HepG2 (cell line): ENCODE measurements at regions of chr11 and their contacts with region 1.

Region 1: DNA sequence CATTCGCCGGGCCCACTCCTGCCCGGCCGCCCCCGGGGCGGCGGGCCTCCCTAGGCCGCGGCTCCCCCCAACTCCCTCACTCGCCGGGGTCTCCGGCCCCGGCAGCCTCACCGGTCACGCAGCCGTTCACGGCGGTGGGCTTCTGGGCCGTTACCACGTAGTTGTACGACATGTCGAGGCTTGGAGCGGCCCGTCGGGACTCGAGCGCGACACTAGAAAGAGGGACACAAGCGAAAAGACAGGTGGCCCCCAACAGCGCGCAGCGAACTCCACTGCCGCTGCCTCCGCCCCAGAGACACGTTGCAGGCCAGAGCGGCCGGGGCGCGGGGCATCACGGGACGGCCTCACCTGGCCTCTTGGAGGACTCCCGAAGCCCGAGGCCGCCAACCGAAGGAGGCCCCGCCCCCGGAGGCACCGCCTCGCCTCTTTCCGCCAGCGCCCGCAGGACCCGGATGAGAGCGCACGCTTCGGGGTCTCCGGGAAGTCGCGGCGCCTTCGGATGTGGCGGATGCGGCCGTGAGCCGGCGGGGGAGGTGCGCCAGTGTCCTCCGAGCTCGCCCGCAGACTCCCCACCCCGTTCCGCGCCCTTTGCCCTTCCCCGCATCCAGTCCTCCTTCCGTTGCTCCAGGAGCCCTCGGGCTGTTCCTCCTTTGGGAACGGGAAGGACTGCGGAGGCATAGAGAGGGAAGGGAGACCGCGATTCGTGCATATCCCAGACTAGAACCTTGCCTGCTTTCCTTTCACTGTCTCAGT is at the starts of genes DDB1 and TKFC:
- DNase-seq: peak; percentile 89
- ATAC-seq: peak; percentile 84
- H3K4me3 ChIP-seq: peak within 1 kb of the TSS; percentile 95 to 98 (median 96)
- H3K27ac ChIP-seq: peak within 1 kb of the TSS; percentile 91
- H3K4me1 ChIP-seq: peaks cover 70% of the 10 kb centered on the region
- H3K27me3 ChIP-seq: no peaks in the 10 kb centered on the region; a peak in 1 of 5 replicates
- CTCF ChIP-seq: peak; percentile 4; the same call in 1 of the 2 replicates
- EP300 ChIP-seq: no peak; a peak in 1 of 4 replicates
- POLR2A ChIP-seq: peak; percentile 94 to 97
- RAD21 ChIP-seq: no peak; the same call in 1 of the 2 replicates
- total RNA-seq, gene DDB1: 266 and 292 TPM in 2 replicates
- total RNA-seq, gene TKFC: 173 and 197 TPM in 2 replicates

Region 2: DNA sequence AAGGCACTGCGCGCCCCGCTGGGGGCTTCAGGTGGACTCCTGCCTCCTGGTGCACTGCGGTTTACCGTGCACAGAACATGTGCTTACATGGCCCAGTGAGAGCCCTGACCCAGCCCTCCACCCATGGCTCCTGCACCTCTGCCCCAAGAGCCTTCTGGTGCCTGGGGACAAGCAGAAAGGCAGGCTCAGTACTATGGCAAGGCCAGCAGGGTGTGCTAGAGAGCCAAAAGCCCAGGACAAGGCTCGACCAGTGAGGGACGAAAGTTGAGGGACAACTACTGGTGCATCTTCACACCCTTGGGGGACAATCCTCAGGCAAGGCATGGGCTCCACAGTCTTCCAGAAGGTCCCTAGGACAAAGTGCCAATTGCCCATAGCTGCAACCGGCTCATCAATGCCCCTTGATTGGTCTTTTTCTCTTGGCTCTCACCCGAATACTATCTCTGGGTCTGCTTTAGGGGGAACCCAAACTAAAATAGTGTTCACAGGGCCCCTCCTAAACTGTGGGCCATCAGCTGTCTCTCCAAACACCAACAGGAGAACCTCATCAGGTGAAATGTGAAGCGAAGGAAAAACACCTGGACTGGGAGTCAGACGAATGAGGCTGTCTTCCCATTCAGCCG is 78.5 kb before region 1 on chr11:
- CTCF ChIA-PET with region 1: no interaction called
- POLR2A ChIA-PET with region 1: no interaction called
- in situ Hi-C with region 1: no loop called
- intact Hi-C with region 1: loop called (anchors 10 kb)
- DNase-seq: peak; percentile 57
- ATAC-seq: peak; percentile 86
- H3K4me3 ChIP-seq: no peak overlapping the region
- H3K27ac ChIP-seq: no peak overlapping the region
- H3K4me1 ChIP-seq: no peaks in the 10 kb centered on the region
- H3K27me3 ChIP-seq: no peaks in the 10 kb centered on the region
- CTCF ChIP-seq: peak; percentile 96
- EP300 ChIP-seq: no peak
- POLR2A ChIP-seq: peak; percentile 12 to 52; a peak in 1 of 4 replicates
- RAD21 ChIP-seq: peak; percentile 74

Region 3: GRCh38 chr11:61361686-61362541 is 28.9 kb after region 1 on chr11 and contains the starts of genes CYB561A3 and TMEM138:
- CTCF ChIA-PET with region 1: no interaction called
- POLR2A ChIA-PET with region 1: interaction called, 146 read pairs
- in situ Hi-C with region 1: no loop called
- intact Hi-C with region 1: loop called (anchors 2 kb)
- DNase-seq: peak; percentile 89
- ATAC-seq: peak; percentile 96
- H3K4me3 ChIP-seq: peak within 1 kb of the TSS; percentile 74 to 80 (median 80)
- H3K27ac ChIP-seq: peak within 1 kb of the TSS; percentile 98
- H3K4me1 ChIP-seq: peaks cover 36% of the 10 kb centered on the region
- H3K27me3 ChIP-seq: no peaks in the 10 kb centered on the region; a peak in 1 of 5 replicates
- CTCF ChIP-seq: 0 out of 2 replicates have a peak, but pooled peaks have one; percentile 15
- EP300 ChIP-seq: no peak; a peak in 1 of 4 replicates
- POLR2A ChIP-seq: peak; percentile 87 to 92
- RAD21 ChIP-seq: no peak; the same call in 1 of the 2 replicates
- total RNA-seq, gene CYB561A3: 11.5 and 14.9 TPM in 2 replicates
- total RNA-seq, gene TMEM138: 29.7 and 43.5 TPM in 2 replicates

Region 4: DNA sequence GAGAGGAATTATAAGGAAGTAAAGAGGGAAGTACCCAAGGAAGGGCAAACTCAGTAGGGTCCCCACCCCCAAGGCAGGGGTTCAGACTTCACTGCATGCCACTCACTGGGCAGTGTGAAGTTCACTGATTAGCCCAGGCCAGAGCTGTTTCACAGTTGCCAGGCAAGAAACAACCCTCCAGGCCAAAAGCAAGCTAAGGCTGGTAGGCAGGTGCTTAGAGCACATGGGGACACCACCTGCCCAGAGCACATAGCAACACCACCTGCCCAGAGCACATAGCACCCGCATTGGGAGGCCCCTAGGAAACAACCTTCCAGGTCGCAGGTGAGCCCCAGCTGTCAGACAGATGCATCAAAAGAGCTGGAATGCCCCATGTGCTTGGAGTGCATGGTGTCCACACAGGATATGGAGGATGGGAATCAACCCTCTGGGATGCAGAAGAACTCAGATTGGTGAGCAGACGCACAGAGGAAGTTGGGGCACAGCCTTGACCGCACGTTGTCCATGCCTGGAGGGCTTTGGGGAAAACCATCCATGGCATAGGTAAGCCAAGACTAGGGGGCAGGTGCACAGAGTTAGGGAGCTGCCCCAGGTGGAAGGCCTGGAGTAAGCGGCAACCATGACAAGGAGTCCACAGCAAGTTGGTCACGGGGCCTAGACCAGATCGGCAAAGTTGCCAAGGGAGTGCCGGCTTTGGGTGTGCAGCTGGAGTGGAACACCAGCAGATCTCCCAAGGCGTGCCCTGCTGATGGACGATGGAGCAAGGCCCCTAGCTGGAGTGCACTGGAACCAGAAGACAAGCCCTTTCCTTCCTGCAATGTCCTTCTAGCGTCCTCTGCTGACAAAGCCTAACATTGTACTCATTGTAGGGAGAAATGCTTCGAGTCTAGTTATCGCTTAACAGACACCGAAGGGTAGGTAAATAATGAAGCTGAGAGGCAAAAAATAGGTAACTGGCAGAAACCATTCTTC is 51.6 kb after region 1 on chr11:
- CTCF ChIA-PET with region 1: interaction called, 69 read pairs
- POLR2A ChIA-PET with region 1: interaction called, 49 read pairs
- in situ Hi-C with region 1: loop called (anchors 5 kb)
- intact Hi-C with region 1: loop called (anchors 1 kb)
- DNase-seq: peak; percentile 39
- ATAC-seq: peak; percentile 82
- H3K4me3 ChIP-seq: no peak overlapping the region
- H3K27ac ChIP-seq: no peak overlapping the region
- H3K4me1 ChIP-seq: peaks cover 9% of the 10 kb centered on the region
- H3K27me3 ChIP-seq: no peaks in the 10 kb centered on the region
- CTCF ChIP-seq: peak; percentile 83
- EP300 ChIP-seq: no peak
- POLR2A ChIP-seq: no peak
- RAD21 ChIP-seq: 0 out of 2 replicates have a peak, but pooled peaks have one; percentile 18

Region 5: GRCh38 chr11:61406991-61407728 is 74.2 kb after region 1 on chr11:
- CTCF ChIA-PET with region 1: no interaction called
- POLR2A ChIA-PET with region 1: no interaction called
- in situ Hi-C with region 1: no loop called
- intact Hi-C with region 1: no loop called
- DNase-seq: no peak
- ATAC-seq: no peak
- H3K4me3 ChIP-seq: no peak overlapping the region
- H3K27ac ChIP-seq: no peak overlapping the region
- H3K4me1 ChIP-seq: no peaks in the 10 kb centered on the region
- H3K27me3 ChIP-seq: no peaks in the 10 kb centered on the region
- CTCF ChIP-seq: no peak
- EP300 ChIP-seq: no peak
- POLR2A ChIP-seq: no peak
- RAD21 ChIP-seq: no peak

Region 6: DNA sequence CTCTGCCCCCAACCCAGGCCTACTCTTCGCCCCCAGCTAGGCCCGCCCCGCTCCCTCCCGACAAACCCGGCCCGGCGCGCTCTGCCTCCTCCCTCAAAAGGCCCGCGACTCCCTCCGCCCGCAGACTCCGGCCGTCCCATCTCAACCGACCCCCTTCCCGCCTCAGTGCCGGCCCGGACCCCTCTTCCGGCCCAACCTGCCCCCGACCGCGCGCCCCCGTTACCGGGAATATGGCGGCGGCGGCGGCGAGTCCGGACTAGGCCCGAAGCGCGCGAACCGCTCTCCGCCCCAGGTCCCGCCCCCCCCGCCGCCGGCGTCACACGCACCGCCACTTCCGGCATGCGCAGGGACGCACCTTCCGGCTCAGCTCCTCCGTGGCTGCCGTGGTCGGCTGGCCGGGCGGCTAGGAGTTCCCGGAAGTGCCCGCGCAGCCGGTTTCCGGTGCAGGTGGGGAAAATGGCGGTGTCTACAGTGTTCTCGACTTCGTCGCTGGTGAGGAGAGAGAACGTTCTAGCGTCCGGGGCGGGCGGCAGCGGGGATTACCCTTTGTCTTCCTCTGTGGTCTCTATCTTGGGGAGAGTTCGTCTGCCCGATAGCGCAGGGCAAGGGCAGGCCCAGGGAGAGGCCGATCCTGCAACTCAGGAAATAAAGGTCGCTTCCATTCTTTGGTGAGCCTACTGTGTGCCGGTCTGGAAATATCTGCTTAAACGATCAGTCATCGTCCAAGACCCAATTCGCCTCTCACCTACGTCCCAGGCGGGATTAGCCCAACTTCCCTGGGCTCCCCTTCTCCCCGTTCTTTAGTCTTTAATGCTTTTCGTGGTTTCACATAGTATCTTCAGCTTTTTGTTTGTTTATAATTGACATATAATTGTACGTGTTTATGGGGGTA is 97.0 kb after region 1 on chr11 and contains the starts of genes CPSF7 and SDHAF2:
- CTCF ChIA-PET with region 1: no interaction called
- POLR2A ChIA-PET with region 1: interaction called, 21 read pairs
- in situ Hi-C with region 1: no loop called
- intact Hi-C with region 1: no loop called
- DNase-seq: peak; percentile 89
- ATAC-seq: peak; percentile 94
- H3K4me3 ChIP-seq: peak within 1 kb of the TSS; percentile 78 to 99 (median 84)
- H3K27ac ChIP-seq: peak within 1 kb of the TSS; percentile 100
- H3K4me1 ChIP-seq: peaks cover 62% of the 10 kb centered on the region
- H3K27me3 ChIP-seq: no peaks in the 10 kb centered on the region; a peak in 2 of 5 replicates
- CTCF ChIP-seq: no peak
- EP300 ChIP-seq: no peak
- POLR2A ChIP-seq: peak; percentile 76 to 84
- RAD21 ChIP-seq: no peak
- total RNA-seq, gene CPSF7: 29.4 and 34.1 TPM in 2 replicates
- total RNA-seq, gene SDHAF2: 44.2 and 53.3 TPM in 2 replicates

Region 7: GRCh38 chr11:61752117-61752924 is 419.3 kb after region 1 on chr11 and contains the start of gene MYRF:
- CTCF ChIA-PET with region 1: no interaction called
- POLR2A ChIA-PET with region 1: no interaction called
- in situ Hi-C with region 1: no loop called
- intact Hi-C with region 1: no loop called
- DNase-seq: no peak
- ATAC-seq: peak; percentile 5
- H3K4me3 ChIP-seq: peak within 1 kb of the TSS; percentile 69 to 87 (median 74)
- H3K27ac ChIP-seq: peak within 1 kb of the TSS; percentile 56
- H3K4me1 ChIP-seq: peaks cover 91% of the 10 kb centered on the region
- H3K27me3 ChIP-seq: no peaks in the 10 kb centered on the region
- CTCF ChIP-seq: peak; percentile 69
- EP300 ChIP-seq: no peak
- POLR2A ChIP-seq: no peak
- RAD21 ChIP-seq: peak; percentile 47; the same call in 1 of the 2 replicates
- total RNA-seq, gene MYRF: 7.9 and 10.2 TPM in 2 replicates